HCT116 (cell line): ENCODE measurements at regions of chr12 and their contacts with region 1.

Region 1: DNA sequence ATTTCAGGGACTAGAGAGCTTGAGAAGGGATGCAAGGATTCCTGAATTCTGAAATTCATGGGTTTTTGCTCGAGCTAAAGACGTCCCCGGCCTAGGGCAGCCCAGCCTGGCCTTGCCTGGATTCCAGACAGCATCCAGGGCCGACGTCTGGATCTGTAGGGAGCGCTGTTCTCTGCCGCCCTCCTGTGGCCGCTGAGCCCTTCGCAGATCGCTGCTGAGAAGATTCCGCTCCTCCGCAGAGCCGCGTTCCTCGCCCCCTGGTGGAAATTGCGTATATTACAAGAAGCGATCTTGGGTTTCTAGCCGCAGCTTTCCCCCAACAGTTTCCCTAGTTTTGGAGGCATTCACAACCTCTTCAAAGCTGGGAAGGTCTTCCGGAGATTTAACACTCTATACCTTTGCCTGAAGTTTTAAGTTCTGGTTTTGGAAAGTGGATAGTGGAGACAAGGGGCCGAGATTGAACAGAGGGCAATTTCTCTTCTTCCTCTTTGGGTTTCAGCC is 5.1 kb downstream of the CISTR start:
- DNase-seq: peak; percentile 81
- ATAC-seq: peak; percentile 96
- H3K4me3 ChIP-seq: no peak overlapping the region
- H3K27ac ChIP-seq: no peak overlapping the region
- H3K4me1 ChIP-seq: peaks cover 0 to 9% of the 10 kb centered on the region in 2 experiments; a peak in 1 of 4 replicates
- H3K27me3 ChIP-seq: no peaks in the 10 kb centered on the region
- CTCF ChIP-seq: peak; percentile 99 to 100 (median 99)
- POLR2A ChIP-seq: no peak
- RAD21 ChIP-seq: peak; percentile 97

Region 2: DNA sequence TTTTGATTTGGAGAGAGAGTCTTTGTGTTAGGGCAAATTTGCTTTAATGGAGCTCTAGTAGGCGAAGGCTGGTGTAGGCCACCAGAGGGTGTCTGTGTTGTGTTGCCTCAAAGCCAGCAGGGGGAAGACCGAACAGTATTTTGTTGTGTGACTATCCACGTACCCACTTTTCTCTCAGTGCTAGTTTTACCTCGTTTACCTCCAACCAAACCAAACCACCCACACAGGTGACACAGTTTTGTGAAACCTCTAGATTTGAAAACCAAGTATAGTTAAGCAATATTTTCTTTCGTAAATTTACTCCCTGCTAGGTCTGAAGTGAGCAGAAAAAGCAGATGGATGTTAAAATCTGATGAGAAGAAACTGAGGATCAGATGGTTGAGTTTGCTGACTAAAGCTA is 203.1 kb before region 1 on chr12:
- CTCF ChIA-PET with region 1: interaction called, 15 read pairs
- POLR2A ChIA-PET with region 1: interaction called, 3 read pairs
- RAD21 ChIA-PET with region 1: no interaction called
- intact Hi-C with region 1: loop called (anchors 1 kb)
- DNase-seq: peak; percentile 37
- ATAC-seq: peak; percentile 91
- H3K4me3 ChIP-seq: no peak overlapping the region
- H3K27ac ChIP-seq: no peak overlapping the region
- H3K4me1 ChIP-seq: peaks cover 12 to 14% of the 10 kb centered on the region in 2 experiments; a peak in 3 of 4 replicates
- H3K27me3 ChIP-seq: no peaks in the 10 kb centered on the region
- CTCF ChIP-seq: peak; percentile 83 to 98 (median 90)
- POLR2A ChIP-seq: no peak
- RAD21 ChIP-seq: peak; percentile 77

Region 3: DNA sequence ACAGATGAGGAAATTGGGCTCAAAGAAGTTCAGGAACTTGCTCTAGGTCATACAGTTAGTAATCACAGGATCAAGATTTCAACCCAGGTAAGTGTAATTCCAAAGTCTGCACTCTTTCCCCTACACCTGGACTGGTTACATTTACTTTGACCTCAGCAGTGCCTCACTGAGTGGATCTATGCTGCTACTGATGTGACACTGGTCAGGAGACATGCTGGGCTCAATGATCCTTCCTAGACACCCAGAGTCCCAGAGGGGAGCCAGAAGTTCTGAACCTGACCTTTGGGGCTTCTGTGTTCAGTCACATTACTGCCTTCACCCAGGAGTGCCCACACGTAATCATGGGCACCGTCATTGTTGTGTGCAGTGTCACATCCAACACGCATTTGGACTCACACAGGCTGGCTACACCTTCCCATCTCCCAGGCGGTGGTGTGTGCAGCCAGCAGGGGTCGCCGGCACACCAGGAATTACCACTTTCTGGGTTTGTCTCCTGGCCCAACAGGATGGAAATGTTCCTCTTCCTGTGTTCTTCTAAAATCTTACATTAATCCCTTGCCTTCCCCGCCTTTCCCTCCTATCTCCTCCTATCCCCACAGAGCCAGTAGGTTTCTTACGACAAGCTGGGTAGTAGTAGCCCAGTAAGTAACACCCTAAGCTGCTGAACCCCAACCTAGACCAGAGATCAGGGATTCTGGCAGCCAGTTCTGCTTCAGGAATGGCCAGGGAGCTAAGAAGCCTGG is 45.0 kb before region 1 on chr12:
- CTCF ChIA-PET with region 1: interaction called, 146 read pairs
- POLR2A ChIA-PET with region 1: interaction called, 5 read pairs
- RAD21 ChIA-PET with region 1: interaction called, 6 to 8 read pairs
- intact Hi-C with region 1: loop called (anchors 1 kb)
- DNase-seq: peak; percentile 60
- ATAC-seq: peak; percentile 99
- H3K4me3 ChIP-seq: no peak overlapping the region
- H3K27ac ChIP-seq: no peak overlapping the region
- H3K4me1 ChIP-seq: peaks cover under 1 to 8% of the 10 kb centered on the region in 2 experiments; a peak in 2 of 4 replicates
- H3K27me3 ChIP-seq: peaks cover 8% of the 10 kb centered on the region
- CTCF ChIP-seq: peak; percentile 89 to 98 (median 90)
- POLR2A ChIP-seq: no peak
- RAD21 ChIP-seq: peak; percentile 98

Region 4: DNA sequence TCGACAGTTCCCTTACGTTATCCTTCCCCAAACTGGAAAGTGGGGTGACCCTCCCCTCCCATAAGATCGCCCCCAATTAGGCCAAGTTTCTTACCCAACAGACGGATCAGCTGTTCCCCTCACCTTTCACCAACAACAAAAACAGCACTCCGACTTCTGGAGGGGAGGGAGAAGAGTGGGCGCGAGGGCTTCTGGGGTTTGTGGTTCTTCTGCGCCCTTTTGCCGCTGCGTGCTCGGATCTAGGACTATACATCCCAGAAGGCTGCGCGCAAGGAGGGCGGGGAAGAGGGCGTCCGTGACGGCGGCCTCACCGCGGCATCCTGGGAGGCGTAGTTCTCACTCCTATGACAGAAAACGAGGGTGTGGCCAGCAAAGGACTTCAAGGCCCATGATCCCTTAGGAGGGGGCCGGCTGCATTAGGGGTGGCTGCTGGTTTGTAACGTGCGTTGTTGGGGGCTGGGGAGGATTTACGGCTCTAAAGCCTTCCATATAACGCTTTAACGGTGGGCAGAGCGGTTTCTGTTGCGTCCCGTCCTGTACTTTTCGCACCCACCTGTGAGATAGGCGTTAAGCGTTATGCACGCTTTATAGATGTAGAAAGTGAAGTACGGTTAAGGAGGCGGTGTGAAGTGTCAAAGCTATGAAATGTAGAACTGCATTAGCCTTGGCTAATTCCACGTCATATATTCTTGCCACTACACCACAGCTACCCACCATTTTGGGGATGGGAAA is 19.2 kb before region 1 on chr12 and contains the start of gene CALCOCO1:
- CTCF ChIA-PET with region 1: interaction called, 10 read pairs
- POLR2A ChIA-PET with region 1: no interaction called
- RAD21 ChIA-PET with region 1: no interaction called
- intact Hi-C with region 1: no loop called
- DNase-seq: peak; percentile 96
- ATAC-seq: peak; percentile 99
- H3K4me3 ChIP-seq: peak within 1 kb of the TSS; percentile 70 to 86
- H3K27ac ChIP-seq: no peak within 1 kb of the TSS
- H3K4me1 ChIP-seq: peaks cover 10 to 25% of the 10 kb centered on the region in 2 experiments
- H3K27me3 ChIP-seq: no peaks in the 10 kb centered on the region
- CTCF ChIP-seq: no peak
- POLR2A ChIP-seq: peak; percentile 56
- RAD21 ChIP-seq: no peak
- total RNA-seq, gene CALCOCO1: 42.6 TPM

Region 5: DNA sequence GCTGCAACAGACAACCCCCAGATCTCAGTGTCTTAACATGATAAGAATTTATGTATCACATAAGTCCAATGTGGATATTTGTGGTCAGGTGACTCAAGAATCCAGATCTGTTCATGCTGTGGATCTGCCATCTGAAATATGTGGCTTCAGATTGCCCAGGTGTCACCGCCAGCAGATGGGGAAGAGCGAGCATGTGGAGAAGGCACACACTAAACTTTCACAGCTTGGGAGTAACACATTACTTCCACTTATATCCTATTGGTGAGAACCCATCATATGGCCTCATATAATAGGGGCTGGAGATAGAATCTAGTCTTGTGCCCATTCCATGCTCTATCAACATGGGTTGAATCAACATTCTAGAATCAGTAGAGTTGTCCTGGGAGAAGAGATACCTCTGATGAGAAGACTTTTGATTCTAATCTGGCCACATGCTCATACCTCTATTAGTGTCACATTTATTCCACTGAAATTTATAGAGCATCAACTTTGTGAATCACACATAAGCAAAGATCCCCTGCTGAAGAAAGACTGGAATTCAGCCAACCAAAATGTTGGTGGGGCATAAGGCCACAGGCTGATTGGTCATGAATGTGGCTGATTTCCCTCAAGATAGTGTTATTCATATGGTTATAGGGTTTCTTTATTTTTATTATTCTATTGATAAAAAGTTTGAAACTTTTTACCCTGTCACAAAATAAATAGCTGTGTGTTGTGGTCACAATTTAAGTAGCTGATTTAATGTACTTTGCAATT is 13.4 kb before region 1 on chr12:
- CTCF ChIA-PET with region 1: interaction called, 20 read pairs
- POLR2A ChIA-PET with region 1: no interaction called
- RAD21 ChIA-PET with region 1: no interaction called
- intact Hi-C with region 1: no loop called
- DNase-seq: no peak
- ATAC-seq: no peak
- H3K4me3 ChIP-seq: no peak overlapping the region
- H3K27ac ChIP-seq: no peak overlapping the region
- H3K4me1 ChIP-seq: no peaks in the 10 kb centered on the region; a peak in 1 of 4 replicates
- H3K27me3 ChIP-seq: no peaks in the 10 kb centered on the region
- CTCF ChIP-seq: no peak
- POLR2A ChIP-seq: no peak
- RAD21 ChIP-seq: no peak

Region 6: GRCh38 chr12:53757095-53757770 is 10.6 kb after region 1 on chr12:
- CTCF ChIA-PET with region 1: interaction called, 70 read pairs
- POLR2A ChIA-PET with region 1: interaction called, 5 read pairs
- RAD21 ChIA-PET with region 1: no interaction called
- intact Hi-C with region 1: no loop called
- DNase-seq: peak; percentile 58
- ATAC-seq: peak; percentile 92
- H3K4me3 ChIP-seq: peak overlapping the region in 1 of 2 experiments; percentile 37; a peak in 1 of 4 replicates
- H3K27ac ChIP-seq: no peak overlapping the region
- H3K4me1 ChIP-seq: peaks cover 3 to 13% of the 10 kb centered on the region in 2 experiments; a peak in 3 of 4 replicates
- H3K27me3 ChIP-seq: peaks cover 6% of the 10 kb centered on the region; the same call in 1 of the 2 replicates
- CTCF ChIP-seq: peak; percentile 62 to 98 (median 95); a peak in 5 of 6 replicates
- POLR2A ChIP-seq: no peak
- RAD21 ChIP-seq: peak; percentile 64

Region 7: DNA sequence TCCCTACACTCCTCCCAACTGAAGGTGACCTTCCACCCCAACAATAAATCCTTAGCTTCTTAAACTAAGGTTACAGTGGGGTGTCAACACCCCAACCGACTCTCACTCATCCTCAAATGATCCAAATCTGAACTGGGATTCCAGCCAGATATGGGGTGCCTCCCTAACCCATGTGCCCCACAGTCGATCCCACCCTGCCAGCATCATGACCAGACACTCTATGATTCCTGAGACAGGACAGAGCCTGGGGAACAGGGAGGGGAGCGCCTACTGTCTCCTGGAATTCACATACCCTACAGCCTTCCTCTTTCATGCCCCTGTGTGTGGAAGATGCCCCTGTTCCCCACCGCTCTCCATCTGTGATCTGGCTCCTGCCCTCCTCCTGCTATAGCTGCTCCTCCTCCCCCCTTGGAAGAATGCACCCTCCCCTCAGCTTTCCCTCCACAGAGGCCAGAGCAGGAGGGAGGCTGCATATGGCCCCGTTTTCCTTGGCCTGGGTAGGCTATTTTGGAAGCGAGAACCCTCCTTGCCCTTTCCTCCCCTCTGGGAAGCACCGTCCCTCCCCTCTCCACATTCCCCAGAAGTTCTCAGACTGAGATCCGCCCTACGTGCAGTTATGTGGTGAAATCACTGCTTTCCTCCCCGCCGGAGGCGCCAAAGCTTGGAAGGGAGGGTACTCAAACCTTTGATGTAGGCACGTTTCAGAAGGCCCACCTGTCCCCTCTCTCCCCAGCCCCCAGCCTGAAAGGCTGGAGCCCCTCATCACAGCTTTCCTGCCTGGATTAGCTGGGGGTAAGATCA is 394.1 kb after region 1 on chr12:
- CTCF ChIA-PET with region 1: no interaction called
- POLR2A ChIA-PET with region 1: no interaction called
- RAD21 ChIA-PET with region 1: no interaction called
- intact Hi-C with region 1: no loop called
- DNase-seq: no peak
- ATAC-seq: no peak
- H3K4me3 ChIP-seq: no peak overlapping the region
- H3K27ac ChIP-seq: no peak overlapping the region
- H3K4me1 ChIP-seq: peaks cover 4 to 5% of the 10 kb centered on the region in 2 experiments; a peak in 1 of 4 replicates
- H3K27me3 ChIP-seq: no peaks in the 10 kb centered on the region; the same call in 1 of the 2 replicates
- CTCF ChIP-seq: no peak
- POLR2A ChIP-seq: no peak
- RAD21 ChIP-seq: no peak

Region 8: GRCh38 chr12:54164387-54165145 is 417.9 kb after region 1 on chr12:
- CTCF ChIA-PET with region 1: no interaction called
- POLR2A ChIA-PET with region 1: no interaction called
- RAD21 ChIA-PET with region 1: no interaction called
- intact Hi-C with region 1: no loop called
- DNase-seq: no peak
- ATAC-seq: no peak
- H3K4me3 ChIP-seq: no peak overlapping the region
- H3K27ac ChIP-seq: no peak overlapping the region
- H3K4me1 ChIP-seq: peaks cover under 1 to 3% of the 10 kb centered on the region in 2 experiments
- H3K27me3 ChIP-seq: no peaks in the 10 kb centered on the region
- CTCF ChIP-seq: no peak
- POLR2A ChIP-seq: no peak
- RAD21 ChIP-seq: no peak